ENCODE measurements at regions of chr6 and their contacts with region 1.

Region 1: DNA sequence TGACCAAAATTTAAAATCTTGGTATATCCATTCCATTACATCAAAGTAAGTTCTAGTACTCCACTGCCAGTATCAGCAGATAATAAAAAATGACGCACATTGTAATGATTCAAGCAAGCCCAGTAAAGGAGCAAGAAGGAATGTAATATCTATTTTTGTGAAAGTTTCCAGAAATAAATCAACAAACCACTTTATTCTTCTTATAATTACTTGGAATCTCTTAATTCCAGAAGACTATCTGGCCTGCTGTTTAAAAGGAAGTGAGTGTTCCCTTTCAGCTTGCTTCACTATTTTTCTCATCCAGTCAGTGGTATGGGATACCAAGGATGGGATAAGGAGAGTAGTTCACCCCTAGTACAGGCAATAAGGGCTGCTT is 42.2 kb upstream of the DSE start:
- DNase-seq: no peak
- H3K4me3 ChIP-seq: no peak overlapping the region
- H3K27ac ChIP-seq: peak overlapping the region; percentile 75
- H3K4me1 ChIP-seq: peaks cover 16% of the 10 kb centered on the region
- H3K27me3 ChIP-seq: no peaks in the 10 kb centered on the region
- CTCF ChIP-seq: no peak
- POLR2A ChIP-seq: no peak

Region 2: DNA sequence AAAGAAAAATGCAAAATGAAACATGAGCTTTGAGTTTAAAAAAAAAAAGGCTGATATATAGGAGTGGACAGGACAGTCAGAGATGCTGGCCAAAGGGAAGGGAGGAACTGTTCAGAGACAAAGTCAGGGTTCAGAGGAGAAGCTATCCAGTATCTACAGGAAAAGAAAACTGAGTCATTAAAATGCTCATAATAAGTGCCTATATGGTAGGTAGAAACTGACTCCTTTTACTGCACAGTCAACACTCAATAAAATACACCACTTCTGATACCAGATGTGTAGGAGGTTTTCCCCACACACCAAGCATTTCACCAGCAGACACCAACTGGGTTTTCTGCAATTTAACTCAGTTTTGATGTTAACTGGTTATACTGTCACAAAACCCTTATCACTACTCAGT is 300.7 kb before region 1 on chr6:
- CTCF ChIA-PET with region 1: no interaction called
- POLR2A ChIA-PET with region 1: no interaction called
- dilution Hi-C with region 1: no loop called
- intact Hi-C with region 1: no loop called
- DNase-seq: no peak
- H3K4me3 ChIP-seq: no peak overlapping the region
- H3K27ac ChIP-seq: no peak overlapping the region
- H3K4me1 ChIP-seq: no peaks in the 10 kb centered on the region
- H3K27me3 ChIP-seq: no peaks in the 10 kb centered on the region
- CTCF ChIP-seq: no peak
- POLR2A ChIP-seq: no peak

Region 3: GRCh38 chr6:116314878-116315277 is 13.6 kb before region 1 on chr6:
- CTCF ChIA-PET with region 1: interaction called, 3 read pairs
- POLR2A ChIA-PET with region 1: no interaction called
- dilution Hi-C with region 1: no loop called
- intact Hi-C with region 1: loop called (anchors 1 kb)
- DNase-seq: peak; percentile 62
- H3K4me3 ChIP-seq: no peak overlapping the region
- H3K27ac ChIP-seq: peak overlapping the region; percentile 29
- H3K4me1 ChIP-seq: peaks cover 18% of the 10 kb centered on the region
- H3K27me3 ChIP-seq: no peaks in the 10 kb centered on the region
- CTCF ChIP-seq: no peak
- POLR2A ChIP-seq: no peak

Measured in endothelial cell of umbilical vein (primary cell).